ENCODE measurements at regions of chr13 and their contacts with region 1.

Region 1: GRCh38 chr13:40666045-40666904 is at the start of gene FOXO1:
- DNase-seq: peak; percentile 96
- ATAC-seq: peak; percentile 88
- total RNA-seq, gene FOXO1: 14.5 TPM

Region 2: GRCh38 chr13:40069173-40070044 is 596.9 kb before region 1 on chr13:
- intact Hi-C with region 1: loop called (anchors 5 kb)
- DNase-seq: no peak
- ATAC-seq: peak; percentile 96

Region 3: DNA sequence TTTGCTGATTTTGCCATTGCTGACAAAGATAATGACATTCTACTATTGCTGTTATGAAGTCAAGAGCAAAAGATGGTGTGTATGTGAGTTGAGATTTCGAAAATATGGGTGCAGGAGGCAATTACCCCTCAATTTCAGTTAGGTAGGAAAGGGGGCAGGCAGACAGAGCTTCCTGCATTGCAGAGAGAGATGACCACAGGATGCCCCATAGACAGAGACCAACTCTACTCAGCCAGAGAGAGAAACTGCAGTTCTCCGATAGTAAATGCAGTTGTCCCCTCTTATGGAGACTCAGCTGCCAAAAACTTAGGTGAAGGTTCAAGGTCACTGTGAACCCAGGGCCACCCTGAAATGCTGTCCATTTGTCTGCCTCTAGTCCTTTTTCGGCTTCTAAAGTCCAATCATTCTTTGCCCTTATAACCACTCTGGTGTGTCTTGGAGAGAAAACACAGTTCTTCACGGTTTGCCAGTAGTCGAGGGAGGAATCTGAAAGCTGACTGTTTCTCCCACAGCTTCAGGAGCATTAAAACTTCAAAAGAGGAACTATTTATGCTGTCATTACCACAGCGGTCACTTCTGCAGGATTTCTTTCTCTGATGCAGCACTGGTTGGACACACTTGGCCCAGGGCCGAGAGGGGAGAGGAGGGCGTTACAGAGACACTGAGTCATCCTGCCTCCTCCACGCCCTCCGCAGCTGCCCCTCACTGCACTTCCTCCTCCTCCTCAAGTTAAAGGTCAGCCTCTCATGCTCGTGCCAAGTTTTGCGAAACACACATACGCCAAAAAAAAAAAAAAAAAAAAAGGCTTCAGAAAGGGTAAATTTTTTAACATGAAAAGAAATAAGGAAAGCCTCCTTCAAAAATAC is 264.1 kb before region 1 on chr13:
- intact Hi-C with region 1: loop called (anchors 2 kb)
- DNase-seq: peak; percentile 98
- ATAC-seq: peak; percentile 97

Region 4: DNA sequence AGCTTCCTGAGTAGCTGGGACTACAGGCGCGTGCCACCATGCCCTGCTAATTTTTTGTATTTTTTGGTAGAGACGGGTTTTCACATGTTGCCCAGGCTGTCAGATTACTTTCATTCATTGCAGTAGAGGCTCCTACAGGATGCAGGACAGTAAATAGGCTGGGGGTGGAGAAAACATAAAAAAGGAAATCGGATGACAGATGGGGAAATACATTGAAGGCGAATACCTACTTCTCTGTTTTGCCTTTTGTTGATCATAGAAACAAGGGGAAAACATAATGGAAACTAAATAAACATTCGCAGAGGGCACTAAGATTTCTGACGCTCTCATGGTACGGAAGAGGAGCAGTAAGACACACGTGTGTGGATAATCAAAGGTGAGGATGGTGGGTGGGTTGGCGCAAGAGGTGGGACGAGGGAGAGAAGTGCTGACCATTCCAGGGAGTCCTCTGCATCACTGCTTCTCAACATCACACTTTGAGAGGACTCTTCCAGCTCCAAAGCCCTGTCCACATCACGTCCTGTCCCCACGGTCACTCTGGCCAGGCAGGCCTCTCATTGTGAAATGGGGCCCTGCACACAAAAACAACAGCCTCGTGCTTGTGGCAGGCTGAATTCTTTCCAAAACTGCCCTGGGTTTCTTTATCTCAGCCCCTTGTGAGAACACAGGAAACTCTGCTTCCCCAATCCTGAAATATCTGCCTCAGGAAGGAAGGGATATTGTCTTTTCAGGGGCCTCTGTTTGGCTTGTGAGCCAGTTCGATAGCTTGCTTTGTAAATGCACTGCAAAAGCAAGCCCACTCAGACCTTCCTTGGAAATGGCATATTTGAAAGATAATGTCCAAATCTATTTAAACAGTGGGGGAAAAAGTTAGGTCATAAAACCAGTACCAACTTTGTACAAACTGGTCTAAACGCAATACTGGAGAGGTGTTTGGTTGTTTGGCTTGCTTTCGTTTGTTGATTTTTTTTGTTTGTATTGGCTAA is 188.4 kb before region 1 on chr13:
- intact Hi-C with region 1: loop called (anchors 2 kb)
- DNase-seq: no peak
- ATAC-seq: peak; percentile 86

Region 5: GRCh38 chr13:40589285-40590109 is 76.8 kb before region 1 on chr13:
- intact Hi-C with region 1: loop called (anchors 5 kb)
- DNase-seq: no peak
- ATAC-seq: peak; percentile 77

Measured in Right ventricle myocardium inferior (tissue), 1 donor.